ENCODE measurements at regions of chr11 and their contacts with region 1.

Region 1: GRCh38 chr11:116481126-116481644 is 291.6 kb downstream of the BUD13 start:
- DNase-seq: no peak
- H3K4me3 ChIP-seq: no peak overlapping the region
- H3K27ac ChIP-seq: no peak overlapping the region
- H3K4me1 ChIP-seq: no peaks in the 10 kb centered on the region
- H3K27me3 ChIP-seq: no peaks in the 10 kb centered on the region
- CTCF ChIP-seq: no peak

Region 2: DNA sequence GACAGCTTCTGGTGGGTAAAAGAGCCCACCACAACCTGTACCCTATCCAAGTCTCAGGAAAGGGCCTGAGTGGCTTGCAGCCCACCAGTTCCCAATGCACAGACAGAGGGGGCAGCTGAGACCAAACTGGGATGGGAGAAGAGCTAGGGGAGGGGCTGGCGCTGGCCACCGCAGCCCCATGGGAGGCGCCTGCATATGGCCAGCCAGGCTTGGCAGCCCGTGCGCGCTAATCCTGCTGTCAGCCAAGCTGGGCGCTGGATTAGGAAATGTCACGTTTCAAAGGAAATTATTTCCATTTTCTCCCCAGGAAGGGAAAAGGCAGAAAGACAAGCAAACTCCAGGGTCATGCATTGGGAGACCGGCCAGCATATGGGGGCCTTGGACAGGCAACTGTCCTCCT is 54.8 kb after region 1 on chr11:
- CTCF ChIA-PET with region 1: no interaction called
- dilution Hi-C with region 1: loop called (anchors 5 kb)
- in situ Hi-C with region 1: no loop called
- intact Hi-C with region 1: no loop called
- DNase-seq: no peak
- H3K4me3 ChIP-seq: no peak overlapping the region
- H3K27ac ChIP-seq: no peak overlapping the region
- H3K4me1 ChIP-seq: no peaks in the 10 kb centered on the region
- H3K27me3 ChIP-seq: peaks cover 3% of the 10 kb centered on the region
- CTCF ChIP-seq: no peak

Measured in mammary epithelial cell (primary cell).